ENCODE measurements at regions of chr3 and their contacts with region 1.

Region 1: GRCh38 chr3:148943506-148944205 is 47.7 kb upstream of the GYG1 start:
- DNase-seq: peak; percentile 34 to 72
- H3K4me3 ChIP-seq: no peak overlapping the region
- H3K27ac ChIP-seq: no peak overlapping the region
- H3K4me1 ChIP-seq: 0 out of 2 replicates have a peak, but pooled peaks cover 3% of the 10 kb centered on the region
- H3K27me3 ChIP-seq: no peaks in the 10 kb centered on the region
- CTCF ChIP-seq: peak; percentile 80

Region 2: DNA sequence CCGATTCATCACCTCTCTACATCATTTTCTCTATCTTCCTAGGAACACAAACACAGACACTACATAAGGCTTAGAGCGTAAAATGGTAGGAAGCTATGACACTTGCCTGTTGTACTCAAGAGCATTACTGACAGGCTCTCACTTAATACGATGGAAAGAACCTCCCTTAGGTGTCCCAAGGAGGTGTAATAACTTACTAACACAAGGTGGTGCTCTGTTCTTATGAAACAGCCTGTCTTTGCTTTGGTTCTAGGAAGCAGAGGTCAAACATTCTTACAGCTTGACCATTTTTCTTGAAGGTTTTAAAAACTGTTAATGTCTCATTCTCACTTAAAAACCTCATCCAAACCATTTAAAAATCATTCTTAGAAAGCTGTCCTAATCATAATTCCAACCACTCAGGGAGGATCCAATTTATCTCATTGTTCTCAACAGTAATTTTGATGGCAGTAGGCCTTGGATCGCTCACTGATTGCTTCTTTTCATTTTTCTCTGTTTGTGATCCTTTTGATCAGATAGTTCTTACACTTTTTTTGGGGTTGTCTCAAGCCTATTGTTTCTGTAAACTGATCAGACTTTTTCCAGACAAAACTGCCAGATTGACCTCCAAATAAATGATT is 563.8 kb before region 1 on chr3:
- CTCF ChIA-PET with region 1: interaction called, 3 read pairs
- POLR2A ChIA-PET with region 1: no interaction called
- intact Hi-C with region 1: loop called (anchors 1 kb)
- DNase-seq: no peak
- H3K4me3 ChIP-seq: no peak overlapping the region
- H3K27ac ChIP-seq: no peak overlapping the region
- H3K4me1 ChIP-seq: no peaks in the 10 kb centered on the region
- H3K27me3 ChIP-seq: no peaks in the 10 kb centered on the region
- CTCF ChIP-seq: peak; percentile 62

Region 3: DNA sequence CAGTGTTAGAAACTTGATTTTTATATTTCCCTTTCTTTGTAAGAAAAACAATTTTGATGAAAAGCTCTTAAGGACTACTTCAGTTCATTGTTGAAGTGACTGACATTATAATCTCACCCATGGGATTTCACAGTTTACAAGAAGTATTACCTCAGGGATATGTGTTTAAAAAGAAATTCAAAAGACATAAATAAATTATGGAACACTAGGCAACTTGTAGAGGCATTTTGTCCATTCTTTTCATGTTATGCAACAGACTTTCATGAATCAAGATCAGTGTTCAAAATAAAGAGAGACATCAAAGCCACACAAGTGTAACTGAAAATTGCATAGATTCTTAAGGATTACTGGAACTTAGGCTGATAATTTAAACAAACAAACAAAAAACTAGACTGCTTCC is 442.8 kb before region 1 on chr3:
- CTCF ChIA-PET with region 1: no interaction called
- POLR2A ChIA-PET with region 1: no interaction called
- intact Hi-C with region 1: loop called (anchors 10 kb)
- DNase-seq: no peak
- H3K4me3 ChIP-seq: no peak overlapping the region
- H3K27ac ChIP-seq: no peak overlapping the region
- H3K4me1 ChIP-seq: no peaks in the 10 kb centered on the region
- H3K27me3 ChIP-seq: no peaks in the 10 kb centered on the region
- CTCF ChIP-seq: no peak

Region 4: DNA sequence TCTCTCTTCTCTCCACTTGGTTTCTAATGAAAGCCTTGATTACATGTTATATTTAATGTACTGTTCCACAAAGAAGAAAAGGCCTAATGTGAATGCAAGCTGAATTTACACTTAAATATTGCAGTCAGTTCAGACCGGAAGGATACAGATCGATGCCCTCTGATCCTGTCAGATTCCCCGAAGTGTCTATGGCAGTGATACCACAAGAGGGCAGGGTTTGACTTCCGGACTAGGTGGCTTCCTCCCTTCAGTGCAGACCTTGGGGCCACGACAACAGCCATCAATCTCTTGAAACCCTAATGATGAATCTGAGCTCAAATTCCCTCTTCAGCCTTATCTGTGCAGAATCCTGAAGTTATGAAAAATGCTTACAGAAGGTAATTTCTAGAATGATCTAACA is 216.4 kb before region 1 on chr3:
- CTCF ChIA-PET with region 1: no interaction called
- POLR2A ChIA-PET with region 1: no interaction called
- intact Hi-C with region 1: loop called (anchors 1 kb)
- DNase-seq: peak in 1 of 2 experiments; percentile 17
- H3K4me3 ChIP-seq: no peak overlapping the region
- H3K27ac ChIP-seq: no peak overlapping the region
- H3K4me1 ChIP-seq: no peaks in the 10 kb centered on the region
- H3K27me3 ChIP-seq: no peaks in the 10 kb centered on the region
- CTCF ChIP-seq: peak; percentile 45

Region 5: DNA sequence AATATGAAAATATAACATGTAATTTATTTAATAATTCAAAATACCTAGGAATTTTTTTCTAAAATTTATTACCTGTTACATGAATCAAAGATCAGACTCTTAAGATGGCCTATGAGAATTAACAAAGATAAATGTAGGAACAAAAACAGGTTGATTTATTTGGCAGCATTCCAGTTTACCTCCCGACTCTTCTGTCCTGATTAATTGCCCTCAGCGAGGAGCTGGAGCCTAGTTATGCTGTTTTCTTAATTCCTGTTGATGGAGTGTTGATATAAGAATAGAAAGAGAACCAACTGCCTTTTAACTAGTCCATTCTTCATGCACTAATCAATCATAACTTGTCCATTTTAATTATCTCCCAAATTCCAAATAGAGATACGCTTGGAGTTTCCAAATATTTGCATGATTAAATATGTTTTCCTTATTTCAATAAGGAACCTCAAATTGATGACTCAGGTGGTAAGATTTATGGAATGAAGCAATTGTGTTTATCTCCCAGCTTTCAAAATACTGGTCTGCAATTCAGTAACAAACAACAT is 126.6 kb before region 1 on chr3:
- CTCF ChIA-PET with region 1: no interaction called
- POLR2A ChIA-PET with region 1: no interaction called
- intact Hi-C with region 1: no loop called
- DNase-seq: no peak
- H3K4me3 ChIP-seq: no peak overlapping the region
- H3K27ac ChIP-seq: no peak overlapping the region
- H3K4me1 ChIP-seq: no peaks in the 10 kb centered on the region
- H3K27me3 ChIP-seq: no peaks in the 10 kb centered on the region
- CTCF ChIP-seq: no peak

Region 6: GRCh38 chr3:148861277-148861869 is 82.3 kb before region 1 on chr3:
- CTCF ChIA-PET with region 1: no interaction called
- POLR2A ChIA-PET with region 1: no interaction called
- intact Hi-C with region 1: loop called (anchors 1 kb)
- DNase-seq: no peak
- H3K4me3 ChIP-seq: no peak overlapping the region
- H3K27ac ChIP-seq: no peak overlapping the region
- H3K4me1 ChIP-seq: no peaks in the 10 kb centered on the region
- H3K27me3 ChIP-seq: no peaks in the 10 kb centered on the region
- CTCF ChIP-seq: peak; percentile 78

Region 7: DNA sequence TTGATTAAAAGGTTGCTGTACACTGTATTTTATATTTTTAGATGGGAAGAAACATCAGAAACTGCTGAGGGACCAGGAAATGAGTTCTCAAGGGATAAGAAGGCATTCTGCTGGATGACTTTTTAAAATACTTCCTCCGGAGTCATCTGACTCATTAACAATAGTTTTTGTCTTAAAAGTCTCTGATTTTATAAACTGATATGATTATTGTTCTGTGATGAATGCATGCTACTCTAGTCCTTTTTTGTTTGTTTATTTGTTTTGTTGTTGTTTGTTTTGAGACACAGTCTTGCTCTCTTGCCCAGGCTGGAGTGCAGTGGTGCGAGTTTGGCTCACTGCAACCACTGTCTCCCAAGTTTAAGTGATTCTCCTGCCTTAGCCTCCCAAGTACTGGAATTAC is 160.9 kb after region 1 on chr3:
- CTCF ChIA-PET with region 1: no interaction called
- POLR2A ChIA-PET with region 1: no interaction called
- intact Hi-C with region 1: no loop called
- DNase-seq: no peak
- H3K4me3 ChIP-seq: no peak overlapping the region
- H3K27ac ChIP-seq: no peak overlapping the region
- H3K4me1 ChIP-seq: no peaks in the 10 kb centered on the region; the same call in 1 of the 2 replicates
- H3K27me3 ChIP-seq: no peaks in the 10 kb centered on the region
- CTCF ChIP-seq: no peak

Region 8: DNA sequence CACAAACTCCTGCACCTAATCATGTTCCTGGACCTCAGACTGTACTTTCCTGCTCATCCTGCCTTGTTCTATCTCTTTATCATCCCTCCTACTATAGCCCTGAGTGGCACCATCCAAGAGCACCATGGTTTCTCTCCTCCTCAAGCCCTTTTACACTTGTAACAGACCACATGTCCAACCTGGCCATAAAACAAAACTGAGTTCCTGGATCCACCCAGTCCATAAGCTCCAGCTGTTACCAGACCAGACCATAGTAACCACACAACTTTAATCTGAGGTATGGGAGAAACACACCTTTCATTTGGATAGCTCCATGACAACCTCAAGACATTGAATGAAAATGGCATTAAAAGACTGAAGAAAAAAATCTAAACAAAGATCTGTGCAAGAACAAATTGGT is 380.7 kb after region 1 on chr3:
- CTCF ChIA-PET with region 1: interaction called, 10 read pairs
- POLR2A ChIA-PET with region 1: no interaction called
- intact Hi-C with region 1: no loop called
- DNase-seq: no peak
- H3K4me3 ChIP-seq: no peak overlapping the region
- H3K27ac ChIP-seq: no peak overlapping the region
- H3K4me1 ChIP-seq: no peaks in the 10 kb centered on the region
- H3K27me3 ChIP-seq: no peaks in the 10 kb centered on the region
- CTCF ChIP-seq: no peak

Region 9: GRCh38 chr3:149366941-149367840 is 423.5 kb after region 1 on chr3:
- CTCF ChIA-PET with region 1: interaction called, 17 read pairs
- POLR2A ChIA-PET with region 1: no interaction called
- intact Hi-C with region 1: no loop called
- DNase-seq: peak; percentile 86 to 99
- H3K4me3 ChIP-seq: 0 out of 2 replicates have a peak overlapping the region, but pooled peaks have one; percentile 6
- H3K27ac ChIP-seq: peak overlapping the region; percentile 99
- H3K4me1 ChIP-seq: peaks cover 63% of the 10 kb centered on the region
- H3K27me3 ChIP-seq: no peaks in the 10 kb centered on the region
- CTCF ChIP-seq: no peak